B cell (primary cell): ENCODE measurements at regions of chr2 and their contacts with region 1.

Region 1: DNA sequence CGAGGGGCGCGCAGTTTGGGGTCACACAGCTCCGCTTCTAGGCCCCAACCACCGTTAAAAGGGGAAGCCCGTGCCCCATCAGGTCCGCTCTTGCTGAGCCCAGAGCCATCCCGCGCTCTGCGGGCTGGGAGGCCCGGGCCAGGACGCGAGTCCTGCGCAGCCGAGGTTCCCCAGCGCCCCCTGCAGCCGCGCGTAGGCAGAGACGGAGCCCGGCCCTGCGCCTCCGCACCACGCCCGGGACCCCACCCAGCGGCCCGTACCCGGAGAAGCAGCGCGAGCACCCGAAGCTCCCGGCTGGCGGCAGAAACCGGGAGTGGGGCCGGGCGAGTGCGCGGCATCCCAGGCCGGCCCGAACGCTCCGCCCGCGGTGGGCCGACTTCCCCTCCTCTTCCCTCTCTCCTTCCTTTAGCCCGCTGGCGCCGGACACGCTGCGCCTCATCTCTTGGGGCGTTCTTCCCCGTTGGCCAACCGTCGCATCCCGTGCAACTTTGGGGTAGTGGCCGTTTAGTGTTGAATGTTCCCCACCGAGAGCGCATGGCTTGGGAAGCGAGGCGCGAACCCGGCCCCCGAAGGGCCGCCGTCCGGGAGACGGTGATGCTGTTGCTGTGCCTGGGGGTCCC is at the start of gene ITGA4:
- DNase-seq: no peak
- ATAC-seq: peak; percentile 79
- H3K4me3 ChIP-seq: peak within 1 kb of the TSS; percentile 90 to 97 (median 93)
- H3K4me3 Mint-ChIP-seq: peak within 1 kb of the TSS; percentile 90
- H3K27ac ChIP-seq: peak within 1 kb of the TSS; percentile 95 to 100
- H3K27ac Mint-ChIP-seq: peak within 1 kb of the TSS; percentile 99
- H3K4me1 ChIP-seq: peaks cover 33 to 38% of the 10 kb centered on the region in 2 donors
- H3K4me1 Mint-ChIP-seq: peaks cover 59% of the 10 kb centered on the region
- H3K27me3 ChIP-seq: no peaks in the 10 kb centered on the region
- H3K27me3 Mint-ChIP-seq: no peaks in the 10 kb centered on the region
- CTCF ChIP-seq: peak; percentile 81
- total RNA-seq, gene ITGA4: 169 and 174 TPM in 2 replicates

Region 2: DNA sequence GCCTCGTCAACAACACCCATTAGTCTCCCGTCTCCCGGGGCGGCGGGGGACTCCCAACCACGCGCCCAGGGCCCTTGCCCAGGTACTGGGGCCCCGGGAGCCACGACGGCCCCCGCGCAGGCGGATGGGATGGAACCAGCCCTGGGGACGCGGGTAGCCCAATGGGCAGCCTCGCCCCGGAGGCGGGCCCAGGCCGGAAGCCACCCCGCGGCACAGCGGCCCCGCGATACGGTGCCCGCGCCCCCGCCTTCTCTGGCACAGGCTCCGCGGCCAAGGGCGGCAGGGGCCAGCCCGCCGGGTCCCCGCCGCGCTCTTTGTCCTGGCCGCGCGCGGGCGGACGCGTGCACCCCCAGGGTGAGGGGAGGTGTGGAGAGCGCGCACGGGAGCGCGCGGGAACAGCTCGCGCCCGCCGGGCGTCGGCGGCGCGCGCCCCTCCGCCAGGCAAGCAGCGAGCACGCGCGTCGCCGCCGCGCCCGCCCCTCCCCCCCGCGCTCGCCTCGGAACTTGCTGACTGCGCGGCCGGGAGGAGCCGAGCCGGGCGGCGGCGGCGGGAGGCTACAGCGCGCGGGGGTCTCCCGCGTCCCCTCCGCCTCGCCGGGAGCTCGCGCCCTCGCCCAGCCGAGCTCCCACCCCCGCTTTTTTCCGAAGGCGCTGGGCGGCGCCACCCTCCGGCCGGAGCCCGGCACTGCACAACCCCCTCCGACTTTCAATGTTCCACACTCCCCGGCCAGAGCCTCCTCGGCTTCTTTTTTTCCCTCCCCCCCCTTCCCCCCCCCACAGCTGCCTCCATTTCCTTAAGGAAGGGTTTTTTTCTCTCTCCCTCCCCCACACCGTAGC is 476.9 kb before region 1 on chr2 and contains the start of gene UBE2E3:
- CTCF ChIA-PET with region 1: no interaction called
- POLR2A ChIA-PET with region 1: no interaction called
- intact Hi-C with region 1: loop called (anchors 2 kb)
- DNase-seq: peak; percentile 91
- ATAC-seq: peak; percentile 76
- H3K4me3 ChIP-seq: peak within 1 kb of the TSS; percentile 62 to 88 (median 68)
- H3K4me3 Mint-ChIP-seq: peak within 1 kb of the TSS; percentile 96
- H3K27ac ChIP-seq: peak within 1 kb of the TSS; percentile 4 to 64
- H3K27ac Mint-ChIP-seq: peak within 1 kb of the TSS; percentile 94
- H3K4me1 ChIP-seq: peaks cover 24 to 25% of the 10 kb centered on the region in 2 donors
- H3K4me1 Mint-ChIP-seq: peaks cover 33% of the 10 kb centered on the region
- H3K27me3 ChIP-seq: no peaks in the 10 kb centered on the region
- H3K27me3 Mint-ChIP-seq: no peaks in the 10 kb centered on the region
- CTCF ChIP-seq: peak; percentile 63
- total RNA-seq, gene UBE2E3: 27.5 and 31.6 TPM in 2 replicates

Region 3: GRCh38 chr2:181183878-181184542 is 273.2 kb before region 1 on chr2:
- CTCF ChIA-PET with region 1: interaction called, 5 read pairs
- POLR2A ChIA-PET with region 1: no interaction called
- intact Hi-C with region 1: loop called (anchors 2 kb)
- DNase-seq: peak; percentile 70
- ATAC-seq: peak; percentile 98
- H3K4me3 ChIP-seq: no peak overlapping the region
- H3K4me3 Mint-ChIP-seq: peak overlapping the region; percentile 41
- H3K27ac ChIP-seq: peak overlapping the region; percentile 27 to 57
- H3K27ac Mint-ChIP-seq: peak overlapping the region; percentile 82
- H3K4me1 ChIP-seq: peaks cover 13 to 16% of the 10 kb centered on the region in 2 donors
- H3K4me1 Mint-ChIP-seq: peaks cover 22% of the 10 kb centered on the region
- H3K27me3 ChIP-seq: no peaks in the 10 kb centered on the region
- H3K27me3 Mint-ChIP-seq: no peaks in the 10 kb centered on the region
- CTCF ChIP-seq: no peak

Region 4: DNA sequence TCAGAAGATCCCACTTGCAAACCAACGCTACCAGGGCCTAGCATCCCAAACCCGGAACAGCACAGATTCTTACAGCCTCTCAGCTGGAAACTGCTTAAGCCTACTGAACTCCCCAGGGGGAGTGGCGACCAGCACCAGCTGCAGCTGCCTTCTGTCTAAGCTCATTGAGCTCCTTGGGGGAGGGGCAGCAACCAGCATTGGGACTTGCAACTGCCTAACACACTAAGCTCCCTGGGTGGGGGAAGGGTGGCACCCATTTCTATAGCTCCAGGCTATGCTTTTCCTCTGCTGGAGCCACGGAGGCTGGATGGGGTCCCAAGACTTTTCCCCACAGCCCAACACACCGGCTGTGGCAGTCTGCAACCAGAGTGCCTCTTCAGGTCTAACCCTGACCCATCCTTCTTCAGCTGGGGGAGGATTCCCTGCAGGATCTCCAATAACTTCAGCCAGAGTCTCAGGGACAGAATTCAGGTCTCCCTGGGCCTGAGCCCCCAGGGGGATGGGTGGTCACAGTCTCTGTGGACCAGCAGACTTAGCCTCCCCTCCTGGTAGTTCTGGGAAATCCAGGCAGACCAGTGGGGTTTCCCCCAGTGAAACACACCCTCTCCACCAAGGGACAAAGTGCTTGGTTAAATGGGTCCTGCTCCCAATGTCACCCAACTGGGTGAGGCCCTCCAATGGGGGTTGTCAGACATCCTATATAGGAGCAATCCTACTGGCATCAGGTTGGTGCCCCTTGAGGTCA is 46.0 kb before region 1 on chr2:
- CTCF ChIA-PET with region 1: interaction called, 11 read pairs
- POLR2A ChIA-PET with region 1: interaction called, 4 read pairs
- intact Hi-C with region 1: loop called (anchors 1 kb)
- DNase-seq: peak; percentile 86
- ATAC-seq: peak; percentile 97
- H3K4me3 ChIP-seq: peak overlapping the region in 2 of 5 experiments; percentile 6 to 46
- H3K4me3 Mint-ChIP-seq: peak overlapping the region; percentile 56
- H3K27ac ChIP-seq: peak overlapping the region; percentile 59
- H3K27ac Mint-ChIP-seq: peak overlapping the region; percentile 89
- H3K4me1 ChIP-seq: peaks cover 35 to 47% of the 10 kb centered on the region in 2 donors
- H3K4me1 Mint-ChIP-seq: peaks cover 81% of the 10 kb centered on the region
- H3K27me3 ChIP-seq: no peaks in the 10 kb centered on the region
- H3K27me3 Mint-ChIP-seq: no peaks in the 10 kb centered on the region
- CTCF ChIP-seq: no peak

Region 5: DNA sequence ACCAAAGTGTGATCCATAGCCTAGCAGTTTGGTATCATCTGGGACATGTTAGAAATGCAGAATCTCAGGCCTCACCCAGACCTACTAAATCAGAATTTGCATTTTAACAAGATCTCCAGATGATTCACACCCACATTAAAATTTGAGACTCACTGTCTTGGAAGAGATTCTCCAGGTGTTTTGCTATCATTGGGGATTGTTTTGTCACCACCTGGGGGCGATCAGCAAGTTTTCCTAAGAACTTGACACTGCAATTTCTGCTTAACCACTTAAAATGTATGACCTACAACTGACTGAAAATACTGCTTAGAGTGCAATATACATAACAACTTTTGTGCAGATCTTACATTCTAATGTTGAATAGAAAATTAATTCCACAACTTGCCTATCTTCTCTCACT is 19.0 kb before region 1 on chr2:
- CTCF ChIA-PET with region 1: interaction called, 16 read pairs
- POLR2A ChIA-PET with region 1: no interaction called
- intact Hi-C with region 1: loop called (anchors 1 kb)
- DNase-seq: peak; percentile 50
- ATAC-seq: peak; percentile 21
- H3K4me3 ChIP-seq: no peak overlapping the region
- H3K4me3 Mint-ChIP-seq: no peak overlapping the region
- H3K27ac ChIP-seq: no peak overlapping the region
- H3K27ac Mint-ChIP-seq: peak overlapping the region; percentile 7
- H3K4me1 ChIP-seq: peaks cover 12 to 13% of the 10 kb centered on the region in 2 donors
- H3K4me1 Mint-ChIP-seq: peaks cover 21% of the 10 kb centered on the region
- H3K27me3 ChIP-seq: no peaks in the 10 kb centered on the region
- H3K27me3 Mint-ChIP-seq: no peaks in the 10 kb centered on the region
- CTCF ChIP-seq: no peak